SK-N-SH (cell line): ENCODE measurements at regions of chr15 and their contacts with region 1.

Region 1: GRCh38 chr15:74291101-74292071 is 55.3 kb downstream of the CCDC33 start:
- DNase-seq: peak; percentile 85
- H3K4me3 ChIP-seq: no peak overlapping the region; a peak in 1 of 4 replicates
- H3K27ac ChIP-seq: peak overlapping the region; percentile 40 to 100; a peak in 3 of 4 replicates
- H3K4me1 ChIP-seq: peaks cover 5 to 70% of the 10 kb centered on the region in 2 experiments; a peak in 3 of 4 replicates
- H3K27me3 ChIP-seq: no peaks in the 10 kb centered on the region
- CTCF ChIP-seq: no peak
- EP300 ChIP-seq: peak; percentile 61 to 99
- RAD21 ChIP-seq: peak; percentile 42

Region 2: DNA sequence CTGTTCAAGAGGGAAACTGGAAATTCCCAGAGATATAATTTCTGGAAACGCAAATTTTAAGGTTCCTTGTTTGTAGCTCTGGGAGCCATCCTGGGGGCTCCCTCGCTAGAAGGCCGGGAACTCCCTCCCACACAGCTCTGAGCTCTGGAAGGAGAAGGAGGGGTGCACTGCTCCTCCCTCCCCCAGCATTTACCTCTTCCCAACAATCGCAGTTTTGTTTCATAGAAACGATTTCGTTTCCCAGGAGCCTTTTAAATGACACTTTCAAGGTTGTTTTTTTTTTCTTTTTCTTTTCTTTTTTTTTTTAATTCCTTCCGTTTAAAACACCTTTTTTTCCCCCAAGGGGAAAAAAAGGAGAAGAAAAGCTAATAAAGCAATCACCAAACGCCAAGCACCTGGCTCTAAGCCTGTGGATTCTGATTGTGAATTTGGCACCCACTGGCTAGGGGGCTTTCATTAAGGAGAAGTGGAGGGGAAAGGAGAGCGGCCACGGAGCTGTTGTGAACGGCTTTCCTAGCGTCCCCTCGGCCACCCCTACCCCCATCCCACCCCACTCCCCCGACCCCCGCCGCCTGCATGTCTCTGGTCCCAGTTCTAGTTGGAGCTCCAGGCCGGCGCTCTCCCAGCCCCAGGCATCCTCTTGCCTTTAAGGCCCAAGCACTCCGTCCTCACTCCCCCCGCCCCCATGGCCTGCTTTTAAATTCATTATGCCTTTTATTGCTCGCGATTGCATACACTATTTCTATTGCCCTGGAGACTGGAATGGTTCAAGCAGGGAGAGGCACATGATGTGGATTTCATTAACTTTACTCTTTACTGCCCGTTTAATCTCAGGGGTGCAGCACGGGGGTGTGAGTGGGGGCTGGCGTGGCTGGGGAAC is 68.9 kb before region 1 on chr15:
- CTCF ChIA-PET with region 1: interaction called, 15 read pairs
- POLR2A ChIA-PET with region 1: interaction called, 14 read pairs
- DNase-seq: peak; percentile 55
- H3K4me3 ChIP-seq: no peak overlapping the region
- H3K27ac ChIP-seq: peak overlapping the region in 1 of 2 experiments; percentile 100; a peak in 2 of 4 replicates
- H3K4me1 ChIP-seq: peaks cover 27 to 71% of the 10 kb centered on the region in 2 experiments
- H3K27me3 ChIP-seq: no peaks in the 10 kb centered on the region
- CTCF ChIP-seq: no peak
- EP300 ChIP-seq: no peak
- RAD21 ChIP-seq: no peak

Region 3: GRCh38 chr15:74233851-74234597 is 57.4 kb before region 1 on chr15:
- CTCF ChIA-PET with region 1: interaction called, 3 read pairs
- POLR2A ChIA-PET with region 1: interaction called, 14 read pairs
- DNase-seq: peak; percentile 44
- H3K4me3 ChIP-seq: no peak overlapping the region
- H3K27ac ChIP-seq: peak overlapping the region in 1 of 2 experiments; percentile 86; a peak in 2 of 4 replicates
- H3K4me1 ChIP-seq: peaks cover 28 to 52% of the 10 kb centered on the region in 2 experiments
- H3K27me3 ChIP-seq: no peaks in the 10 kb centered on the region
- CTCF ChIP-seq: no peak
- EP300 ChIP-seq: no peak
- RAD21 ChIP-seq: no peak

Region 4: DNA sequence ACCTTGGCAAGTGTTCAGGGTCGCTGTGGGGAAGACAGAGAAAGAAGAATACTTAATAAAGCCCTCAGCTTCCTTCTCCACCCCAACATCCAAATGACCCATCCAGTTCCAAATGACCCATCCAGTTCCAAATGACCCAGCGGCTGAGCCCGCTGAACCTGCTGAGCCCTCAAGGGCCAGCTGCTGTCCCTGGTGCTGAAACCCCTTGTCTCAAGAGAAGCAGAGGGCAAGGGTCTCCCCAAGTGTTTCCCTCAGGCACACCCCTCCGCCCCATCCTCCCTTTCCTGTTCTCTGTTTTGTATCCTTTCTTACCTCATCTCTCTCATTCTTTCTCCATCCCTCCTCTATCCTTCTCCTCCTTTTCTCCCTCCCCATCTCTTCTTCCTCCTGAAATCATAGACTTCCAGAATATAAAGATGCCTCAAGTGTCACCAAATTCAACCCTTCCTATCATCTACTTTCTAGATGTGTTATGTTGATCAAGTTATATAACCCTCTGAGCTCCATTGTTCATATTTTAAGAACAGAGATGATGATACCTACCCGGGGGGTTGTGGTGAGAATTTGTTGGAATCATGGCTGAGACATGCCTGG is 26.2 kb before region 1 on chr15:
- CTCF ChIA-PET with region 1: interaction called, 19 read pairs
- POLR2A ChIA-PET with region 1: interaction called, 10 read pairs
- DNase-seq: no peak
- H3K4me3 ChIP-seq: no peak overlapping the region
- H3K27ac ChIP-seq: peak overlapping the region in 1 of 2 experiments; percentile 79; a peak in 2 of 4 replicates
- H3K4me1 ChIP-seq: peaks cover 0 to 40% of the 10 kb centered on the region in 2 experiments; a peak in 2 of 4 replicates
- H3K27me3 ChIP-seq: peaks cover 4% of the 10 kb centered on the region; the same call in 1 of the 2 replicates
- CTCF ChIP-seq: no peak
- EP300 ChIP-seq: no peak
- RAD21 ChIP-seq: no peak

Region 5: DNA sequence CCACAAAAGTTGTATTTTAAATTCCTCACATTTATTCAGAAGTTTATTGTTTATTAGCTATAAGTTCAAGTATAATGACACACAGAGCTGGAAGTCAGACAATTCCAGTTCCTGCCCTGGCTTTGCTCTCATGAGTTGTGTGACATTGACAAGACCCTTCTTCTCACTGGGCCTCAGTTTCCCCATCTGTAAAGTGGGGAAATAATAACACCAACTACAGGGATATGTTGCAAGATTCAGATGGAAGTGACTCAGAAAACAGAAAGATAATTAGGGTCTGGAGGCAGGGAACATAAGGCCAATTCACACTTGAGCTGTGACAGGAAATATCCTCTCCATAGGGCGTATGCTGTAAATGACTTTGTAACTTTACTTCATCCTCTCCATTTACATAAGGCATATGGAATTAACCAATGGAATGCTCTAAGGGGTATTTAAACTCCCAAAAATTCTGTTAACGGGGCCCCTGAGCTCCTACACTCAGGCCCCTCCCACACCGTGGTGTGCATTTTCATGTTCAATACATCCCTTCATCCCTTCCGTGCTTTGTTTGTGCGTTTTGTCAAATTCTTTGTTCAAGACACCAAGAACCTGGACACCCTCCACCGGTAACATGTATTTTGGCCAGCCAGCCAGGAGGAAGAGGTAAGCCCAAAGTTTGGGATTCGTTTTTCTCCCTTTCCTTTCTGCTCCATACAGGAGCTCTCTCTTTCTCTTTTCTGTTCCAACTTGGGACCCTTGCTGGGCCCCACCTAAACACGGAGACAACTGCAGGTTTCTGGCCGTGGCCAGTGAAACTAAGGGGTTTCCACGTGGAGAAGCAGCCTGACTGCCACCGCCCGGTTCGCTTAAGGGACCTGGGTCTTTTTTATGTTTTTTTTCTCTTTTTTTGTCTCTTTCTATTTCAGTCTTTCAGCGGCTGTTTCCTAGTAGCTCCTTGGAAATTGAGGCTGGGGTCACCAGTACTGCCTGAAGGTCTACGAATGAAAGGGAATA is 59.2 kb after region 1 on chr15:
- CTCF ChIA-PET with region 1: no interaction called
- POLR2A ChIA-PET with region 1: no interaction called
- DNase-seq: no peak
- H3K4me3 ChIP-seq: no peak overlapping the region
- H3K27ac ChIP-seq: no peak overlapping the region
- H3K4me1 ChIP-seq: no peaks in the 10 kb centered on the region
- H3K27me3 ChIP-seq: peaks cover 14% of the 10 kb centered on the region; the same call in 1 of the 2 replicates
- CTCF ChIP-seq: no peak
- EP300 ChIP-seq: no peak
- RAD21 ChIP-seq: no peak